ENCODE measurements at regions of chr3 and their contacts with region 1.

Region 1: DNA sequence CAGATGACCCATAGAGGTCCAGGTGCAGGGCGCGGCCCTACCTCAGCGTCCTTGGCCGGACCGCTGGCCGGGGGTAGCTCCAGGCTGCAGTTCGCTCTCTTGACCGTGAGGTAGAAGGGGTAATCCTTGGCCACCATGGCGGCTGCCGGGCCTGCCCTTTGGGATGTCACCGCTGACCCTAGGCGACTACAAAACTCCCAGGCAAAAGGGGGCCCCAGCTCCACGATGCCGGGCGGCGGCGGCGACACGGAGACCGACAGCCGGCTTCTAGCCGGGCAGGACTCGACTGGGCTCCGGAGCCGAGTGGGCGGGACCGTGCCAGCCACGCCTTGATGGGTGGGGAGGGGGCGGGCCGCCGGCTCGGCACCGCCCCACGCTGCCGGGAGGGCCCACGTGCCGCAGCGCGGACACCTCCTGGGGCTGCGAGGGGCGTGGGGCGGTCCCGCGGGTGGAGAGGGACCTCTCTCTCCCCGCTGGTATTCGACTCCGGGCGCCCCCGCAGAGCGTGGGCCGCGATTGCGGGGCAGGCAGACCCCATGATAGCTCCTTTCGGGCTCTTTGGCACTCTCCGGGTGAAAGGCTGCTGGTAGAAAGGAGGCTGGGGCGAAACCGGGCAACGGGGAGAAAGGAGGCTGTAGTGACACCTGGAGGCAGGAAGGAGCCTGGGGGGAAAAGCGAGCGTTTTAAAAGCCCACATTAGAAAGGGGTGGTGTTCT is at the start of gene ARHGEF3:
- DNase-seq: peak; percentile 80 to 89 (median 88)
- ATAC-seq: peak; percentile 94
- H3K4me3 ChIP-seq: peak within 1 kb of the TSS; percentile 88
- H3K4me3 Mint-ChIP-seq: peak within 1 kb of the TSS; percentile 93 to 98 (median 96)
- H3K27ac ChIP-seq: peak within 1 kb of the TSS; percentile 83
- H3K27ac Mint-ChIP-seq: peak within 1 kb of the TSS; percentile 82 to 96 (median 91)
- H3K4me1 ChIP-seq: peaks cover 22 to 30% of the 10 kb centered on the region in 2 donors
- H3K4me1 Mint-ChIP-seq: peaks cover 25 to 49% (median 35%) of the 10 kb centered on the region in 7 donors
- H3K27me3 ChIP-seq: no peaks in the 10 kb centered on the region
- H3K27me3 Mint-ChIP-seq: no peaks in the 10 kb centered on the region
- total RNA-seq, gene ARHGEF3: 79.6 to 99.7 (median 87.0) TPM

Region 2: DNA sequence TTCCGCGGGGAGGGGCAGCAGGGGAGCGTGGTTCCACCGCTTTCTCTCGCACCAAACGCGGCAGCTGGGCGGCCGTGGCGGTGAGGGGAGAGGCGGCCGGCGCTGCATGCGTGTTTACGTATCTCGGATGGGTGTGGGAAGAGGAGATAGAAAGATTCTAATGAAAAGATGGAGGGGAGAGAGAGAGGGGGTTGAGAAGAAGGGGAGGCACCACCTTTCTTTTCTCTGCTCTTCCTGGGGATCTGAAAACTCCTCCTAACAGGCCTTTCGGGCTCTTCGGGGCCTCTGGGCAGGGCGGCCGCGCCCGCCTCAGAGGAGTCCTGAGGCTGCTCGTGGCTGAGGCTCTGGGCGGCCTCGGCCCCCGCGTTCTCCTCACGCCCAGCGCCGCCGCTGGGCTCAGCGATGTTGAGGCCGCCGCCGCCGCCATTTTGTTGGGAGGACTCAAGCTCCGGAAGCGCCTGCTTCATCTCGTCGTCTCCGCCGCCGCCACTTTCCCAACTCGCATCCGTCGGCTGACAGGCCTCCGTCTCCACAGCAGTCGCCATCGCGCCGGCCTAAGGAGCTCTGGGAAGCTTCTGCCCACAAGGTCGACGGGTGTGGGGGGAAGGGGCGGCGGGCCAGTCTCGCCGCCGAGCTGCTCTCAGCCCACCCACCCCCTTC is 119.2 kb before region 1 on chr3:
- CTCF ChIA-PET with region 1: interaction called, 7 read pairs
- POLR2A ChIA-PET with region 1: interaction called, 34 read pairs
- intact Hi-C with region 1: loop called (anchors 1 kb)
- DNase-seq: peak; percentile 70 to 84 (median 79)
- ATAC-seq: peak; percentile 81
- H3K4me3 ChIP-seq: peak overlapping the region; percentile 93
- H3K4me3 Mint-ChIP-seq: peak overlapping the region; percentile 88 to 100 (median 94)
- H3K27ac ChIP-seq: peak overlapping the region; percentile 92
- H3K27ac Mint-ChIP-seq: peak overlapping the region; percentile 90 to 100 (median 94)
- H3K4me1 ChIP-seq: peaks cover 33 to 34% of the 10 kb centered on the region in 2 donors
- H3K4me1 Mint-ChIP-seq: peaks cover 28 to 55% (median 48%) of the 10 kb centered on the region in 7 donors
- H3K27me3 ChIP-seq: no peaks in the 10 kb centered on the region
- H3K27me3 Mint-ChIP-seq: no peaks in the 10 kb centered on the region

Region 3: DNA sequence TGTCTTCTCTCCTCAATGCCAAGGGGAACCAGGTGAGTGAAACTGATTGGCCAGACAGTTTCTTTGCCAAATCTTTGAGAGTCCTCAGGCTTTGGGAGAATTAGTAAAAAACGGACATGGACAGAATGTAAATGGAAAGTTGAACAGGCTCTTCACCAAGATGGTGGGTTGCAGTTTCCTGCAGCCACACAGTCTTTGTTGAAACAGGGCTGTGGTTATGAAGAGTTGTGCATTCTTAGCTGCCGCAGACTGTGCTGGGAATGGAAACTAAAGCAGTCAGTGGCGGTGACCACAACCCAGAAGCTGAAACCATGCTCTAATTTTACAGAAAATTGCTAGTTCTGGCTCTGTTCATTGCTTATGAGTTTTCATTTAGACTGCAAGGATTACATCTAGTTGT is 76.6 kb before region 1 on chr3:
- CTCF ChIA-PET with region 1: interaction called, 8 read pairs
- POLR2A ChIA-PET with region 1: interaction called, 14 read pairs
- intact Hi-C with region 1: loop called in 1 of 2 experiments (anchors 1 kb)
- DNase-seq: peak in 7 of 9 donors; percentile 27 to 61 (median 44)
- ATAC-seq: peak; percentile 88
- H3K4me3 ChIP-seq: no peak overlapping the region
- H3K4me3 Mint-ChIP-seq: peak overlapping the region; percentile 55 to 87 (median 72)
- H3K27ac ChIP-seq: peak overlapping the region; percentile 51
- H3K27ac Mint-ChIP-seq: peak overlapping the region; percentile 63 to 98 (median 90)
- H3K4me1 ChIP-seq: peaks cover 20 to 31% of the 10 kb centered on the region in 2 donors
- H3K4me1 Mint-ChIP-seq: peaks cover 12 to 70% (median 51%) of the 10 kb centered on the region in 7 donors
- H3K27me3 ChIP-seq: no peaks in the 10 kb centered on the region
- H3K27me3 Mint-ChIP-seq: no peaks in the 10 kb centered on the region

Region 4: DNA sequence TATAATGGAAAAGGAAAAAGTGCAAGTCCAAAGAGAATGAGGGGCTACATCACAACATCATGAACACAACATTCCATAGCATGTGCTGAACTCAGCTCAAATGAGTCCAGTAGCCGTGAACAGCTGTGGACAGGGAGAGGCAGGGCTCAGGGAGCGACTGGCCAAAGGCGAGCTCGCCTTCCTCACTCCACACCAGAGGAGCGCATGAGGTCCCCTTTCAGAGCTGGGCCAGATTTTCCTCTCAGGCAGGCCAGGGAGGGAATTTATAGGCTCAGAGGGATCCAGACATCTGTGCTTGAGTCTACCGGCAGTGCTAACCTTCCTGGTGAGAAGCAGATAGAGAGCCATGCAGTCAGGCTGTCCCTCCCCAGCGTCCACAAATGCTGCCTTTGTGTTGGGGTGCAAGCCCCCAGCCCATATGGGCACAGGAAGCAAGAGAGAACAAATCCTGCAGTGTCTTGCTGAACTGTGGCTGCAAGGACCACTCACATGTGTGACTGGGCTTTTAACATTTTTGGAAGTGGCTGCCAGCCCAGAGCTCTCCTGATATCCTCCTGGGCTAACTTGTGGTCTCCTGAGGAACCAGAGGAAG is 32.6 kb before region 1 on chr3:
- CTCF ChIA-PET with region 1: interaction called, 4 read pairs
- POLR2A ChIA-PET with region 1: interaction called, 12 read pairs
- intact Hi-C with region 1: no loop called
- DNase-seq: no peak
- ATAC-seq: no peak
- H3K4me3 ChIP-seq: no peak overlapping the region
- H3K4me3 Mint-ChIP-seq: peak overlapping the region in 1 of 10 donors; percentile 6
- H3K27ac ChIP-seq: no peak overlapping the region
- H3K27ac Mint-ChIP-seq: peak overlapping the region; percentile 3 to 89 (median 64)
- H3K4me1 ChIP-seq: peaks cover 15 to 21% of the 10 kb centered on the region in 2 donors
- H3K4me1 Mint-ChIP-seq: peaks cover 50 to 83% (median 72%) of the 10 kb centered on the region in 7 donors
- H3K27me3 ChIP-seq: no peaks in the 10 kb centered on the region
- H3K27me3 Mint-ChIP-seq: no peaks in the 10 kb centered on the region

Region 5: DNA sequence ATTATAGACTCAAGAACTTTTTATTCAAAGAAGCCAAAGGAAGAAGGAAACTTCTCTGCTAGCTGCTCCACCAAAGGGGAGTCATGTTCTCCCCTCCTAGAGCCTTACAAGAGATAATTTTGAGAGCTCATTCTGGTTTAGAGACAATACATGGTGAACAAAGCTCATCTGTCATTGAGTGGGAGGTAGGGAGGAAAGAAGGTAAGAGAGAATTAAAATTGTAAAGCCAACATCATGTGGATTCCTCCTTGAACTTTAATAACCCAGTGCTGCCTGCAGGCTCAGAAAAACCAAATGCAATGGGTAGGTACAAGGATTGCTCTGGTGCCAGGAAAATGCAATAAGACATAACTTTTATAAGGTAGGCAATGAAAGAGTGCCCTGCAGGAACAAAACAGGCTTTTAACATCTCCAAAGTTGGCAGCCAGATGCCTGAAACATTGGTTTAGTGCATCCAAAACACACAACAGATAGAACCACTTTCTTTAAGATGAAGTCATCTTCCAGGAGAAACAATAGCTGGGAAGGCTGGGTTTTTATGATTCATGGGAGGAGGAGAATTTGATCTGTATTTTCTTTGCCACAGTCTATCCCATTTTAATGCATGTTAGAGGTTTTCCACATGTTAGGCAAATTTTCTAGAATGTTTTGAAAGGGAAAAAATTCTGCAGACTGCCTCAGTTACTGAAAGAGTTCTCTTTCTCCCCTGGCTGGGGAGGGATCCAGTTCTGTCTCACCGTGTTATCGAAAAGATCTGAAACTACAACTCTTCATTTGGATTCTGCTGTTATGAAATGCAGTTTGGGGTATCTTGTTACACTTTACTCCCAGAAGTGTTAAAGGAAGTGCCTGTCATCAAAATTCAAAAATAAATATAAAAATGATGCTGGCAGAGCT is 11.2 kb after region 1 on chr3:
- CTCF ChIA-PET with region 1: interaction called, 10 read pairs
- POLR2A ChIA-PET with region 1: interaction called, 55 read pairs
- intact Hi-C with region 1: loop called in 1 of 2 experiments (anchors 1 kb)
- DNase-seq: no peak
- ATAC-seq: no peak
- H3K4me3 ChIP-seq: peak overlapping the region; percentile 4
- H3K4me3 Mint-ChIP-seq: peak overlapping the region; percentile 17 to 76 (median 64)
- H3K27ac ChIP-seq: peak overlapping the region; percentile 56
- H3K27ac Mint-ChIP-seq: peak overlapping the region; percentile 29 to 92 (median 86)
- H3K4me1 ChIP-seq: peaks cover 29 to 41% of the 10 kb centered on the region in 2 donors
- H3K4me1 Mint-ChIP-seq: peaks cover 38 to 82% (median 73%) of the 10 kb centered on the region in 7 donors
- H3K27me3 ChIP-seq: no peaks in the 10 kb centered on the region
- H3K27me3 Mint-ChIP-seq: no peaks in the 10 kb centered on the region

Region 6: GRCh38 chr3:56923521-56924224 is 121.9 kb after region 1 on chr3:
- CTCF ChIA-PET with region 1: interaction called, 29 read pairs
- POLR2A ChIA-PET with region 1: interaction called, 62 read pairs
- intact Hi-C with region 1: loop called (anchors 1 kb)
- DNase-seq: peak; percentile 21 to 85 (median 78)
- ATAC-seq: peak; percentile 89
- H3K4me3 ChIP-seq: peak overlapping the region; percentile 10
- H3K4me3 Mint-ChIP-seq: peak overlapping the region; percentile 52 to 82 (median 76)
- H3K27ac ChIP-seq: peak overlapping the region; percentile 82
- H3K27ac Mint-ChIP-seq: peak overlapping the region; percentile 86 to 100 (median 99)
- H3K4me1 ChIP-seq: peaks cover 61 to 77% of the 10 kb centered on the region in 2 donors
- H3K4me1 Mint-ChIP-seq: peaks cover 50 to 93% (median 84%) of the 10 kb centered on the region in 7 donors
- H3K27me3 ChIP-seq: no peaks in the 10 kb centered on the region
- H3K27me3 Mint-ChIP-seq: no peaks in the 10 kb centered on the region

Region 7: GRCh38 chr3:57597122-57597923 is 795.5 kb after region 1 on chr3 and contains the start of gene ARF4:
- CTCF ChIA-PET with region 1: no interaction called
- POLR2A ChIA-PET with region 1: no interaction called
- intact Hi-C with region 1: loop called in 1 of 2 experiments (anchors 5 kb)
- DNase-seq: peak; percentile 99 to 100 (median 100)
- ATAC-seq: peak; percentile 93
- H3K4me3 ChIP-seq: peak within 1 kb of the TSS; percentile 86
- H3K4me3 Mint-ChIP-seq: peak within 1 kb of the TSS; percentile 91 to 99 (median 98)
- H3K27ac ChIP-seq: peak within 1 kb of the TSS; percentile 94
- H3K27ac Mint-ChIP-seq: peak within 1 kb of the TSS; percentile 95 to 100 (median 99)
- H3K4me1 ChIP-seq: peaks cover 29 to 30% of the 10 kb centered on the region in 2 donors
- H3K4me1 Mint-ChIP-seq: peaks cover 33 to 64% (median 51%) of the 10 kb centered on the region in 7 donors
- H3K27me3 ChIP-seq: no peaks in the 10 kb centered on the region
- H3K27me3 Mint-ChIP-seq: no peaks in the 10 kb centered on the region
- total RNA-seq, gene ARF4: 50.9 to 85.5 (median 57.5) TPM

Measured in naive thymus-derived CD4-positive, alpha-beta T cell (primary cell).